CD8-positive, alpha-beta memory T cell (primary cell): ENCODE measurements at regions of chr1 and their contacts with region 1.

Region 1: DNA sequence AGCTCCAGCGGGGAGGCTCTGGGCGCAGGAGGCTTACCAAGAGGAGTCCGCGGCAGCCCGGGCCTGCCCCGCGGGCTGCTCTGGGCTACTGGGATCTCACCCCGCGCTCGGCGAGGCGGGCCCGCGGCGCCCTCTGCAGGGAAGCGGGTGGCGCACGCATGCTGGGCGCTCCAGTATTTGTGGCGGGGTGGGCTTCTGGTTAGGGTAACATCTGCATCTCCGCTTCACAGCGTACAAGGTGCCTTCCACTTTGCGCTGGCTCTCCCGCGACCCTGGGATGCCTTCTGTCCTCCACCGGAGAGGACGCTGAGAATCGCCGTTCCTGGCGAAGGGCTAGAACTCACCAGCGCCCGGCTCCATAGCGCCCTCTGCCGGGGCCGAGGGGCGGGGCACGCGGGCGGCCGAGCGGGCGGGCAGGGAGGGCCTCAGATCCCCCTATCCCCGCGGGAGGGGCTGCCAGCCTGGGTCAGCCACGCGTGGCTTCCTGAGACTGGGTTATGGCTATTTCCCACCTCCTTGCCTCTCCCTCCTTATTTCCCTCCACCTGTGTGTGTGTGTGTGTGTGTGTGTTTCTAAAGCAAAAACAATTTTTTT is 46.6 kb upstream of the CTBS start:
- DNase-seq: peak; percentile 70 to 85 (median 80)
- H3K4me3 ChIP-seq: peak overlapping the region; percentile 77
- H3K4me3 Mint-ChIP-seq: peak overlapping the region; percentile 85 to 99 (median 90)
- H3K27ac ChIP-seq: no peak overlapping the region
- H3K27ac Mint-ChIP-seq: peak overlapping the region in 4 of 8 donors; percentile 11 to 90 (median 62)
- H3K4me1 ChIP-seq: no peaks in the 10 kb centered on the region
- H3K4me1 Mint-ChIP-seq: peaks cover 5 to 10% (median 10%) of the 10 kb centered on the region in 3 donors
- H3K27me3 ChIP-seq: no peaks in the 10 kb centered on the region
- H3K27me3 Mint-ChIP-seq: peaks cover 2 to 13% of the 10 kb centered on the region in 2 donors

Region 2: GRCh38 chr1:84143796-84144565 is 476.8 kb before region 1 on chr1 and contains the start of gene PRKACB:
- CTCF ChIA-PET with region 1: interaction called, 14 read pairs
- POLR2A ChIA-PET with region 1: no interaction called
- DNase-seq: peak in 3 of 5 donors; percentile 49 to 68 (median 52)
- H3K4me3 ChIP-seq: peak within 1 kb of the TSS; percentile 65
- H3K4me3 Mint-ChIP-seq: peak within 1 kb of the TSS; percentile 92 to 99 (median 95)
- H3K27ac ChIP-seq: peak within 1 kb of the TSS; percentile 52
- H3K27ac Mint-ChIP-seq: peak within 1 kb of the TSS; percentile 87 to 99 (median 96)
- H3K4me1 ChIP-seq: peaks cover 40% of the 10 kb centered on the region
- H3K4me1 Mint-ChIP-seq: peaks cover 35 to 62% (median 49%) of the 10 kb centered on the region in 3 donors
- H3K27me3 ChIP-seq: no peaks in the 10 kb centered on the region
- H3K27me3 Mint-ChIP-seq: no peaks in the 10 kb centered on the region
- total RNA-seq, gene PRKACB: 47.7 to 54.6 TPM

Region 3: GRCh38 chr1:84433258-84434080 is 187.3 kb before region 1 on chr1:
- CTCF ChIA-PET with region 1: interaction called, 17 read pairs
- POLR2A ChIA-PET with region 1: no interaction called
- DNase-seq: peak in 4 of 5 donors; percentile 35 to 81 (median 74)
- H3K4me3 ChIP-seq: peak overlapping the region; percentile 28
- H3K4me3 Mint-ChIP-seq: peak overlapping the region; percentile 61 to 86 (median 73)
- H3K27ac ChIP-seq: peak overlapping the region; percentile 49
- H3K27ac Mint-ChIP-seq: peak overlapping the region in 7 of 8 donors; percentile 76 to 88 (median 83)
- H3K4me1 ChIP-seq: peaks cover 43% of the 10 kb centered on the region
- H3K4me1 Mint-ChIP-seq: peaks cover 0 to 21% (median 9%) of the 10 kb centered on the region in 3 donors
- H3K27me3 ChIP-seq: no peaks in the 10 kb centered on the region
- H3K27me3 Mint-ChIP-seq: peaks cover 0 to under 1% of the 10 kb centered on the region in 2 donors

Region 4: GRCh38 chr1:84644472-84644871 is 23.7 kb after region 1 on chr1:
- CTCF ChIA-PET with region 1: no interaction called
- POLR2A ChIA-PET with region 1: no interaction called
- DNase-seq: no peak
- H3K4me3 ChIP-seq: no peak overlapping the region
- H3K4me3 Mint-ChIP-seq: no peak overlapping the region
- H3K27ac ChIP-seq: no peak overlapping the region
- H3K27ac Mint-ChIP-seq: no peak overlapping the region
- H3K4me1 ChIP-seq: no peaks in the 10 kb centered on the region
- H3K4me1 Mint-ChIP-seq: no peaks in the 10 kb centered on the region
- H3K27me3 ChIP-seq: no peaks in the 10 kb centered on the region
- H3K27me3 Mint-ChIP-seq: no peaks in the 10 kb centered on the region

Region 5: GRCh38 chr1:84669831-84670230 is 49.0 kb after region 1 on chr1:
- CTCF ChIA-PET with region 1: no interaction called
- POLR2A ChIA-PET with region 1: no interaction called
- DNase-seq: no peak
- H3K4me3 ChIP-seq: no peak overlapping the region
- H3K4me3 Mint-ChIP-seq: no peak overlapping the region
- H3K27ac ChIP-seq: no peak overlapping the region
- H3K27ac Mint-ChIP-seq: no peak overlapping the region
- H3K4me1 ChIP-seq: no peaks in the 10 kb centered on the region
- H3K4me1 Mint-ChIP-seq: peaks cover 8 to 18% (median 11%) of the 10 kb centered on the region in 3 donors
- H3K27me3 ChIP-seq: no peaks in the 10 kb centered on the region
- H3K27me3 Mint-ChIP-seq: no peaks in the 10 kb centered on the region